Heart left ventricle (tissue), 16 donors: ENCODE measurements at regions of chr14 and their contacts with region 1.

Region 1: GRCh38 chr14:24978862-24979724 is 70.9 kb downstream of the STXBP6 start:
- DNase-seq: no peak
- ATAC-seq: no peak
- H3K4me3 ChIP-seq: no peak overlapping the region
- H3K27ac ChIP-seq: no peak overlapping the region
- H3K4me1 ChIP-seq: peaks cover 0 to 39% (median 8%) of the 10 kb centered on the region in 12 donors
- H3K27me3 ChIP-seq: no peaks in the 10 kb centered on the region
- CTCF ChIP-seq: no peak
- POLR2A ChIP-seq: no peak

Region 2: DNA sequence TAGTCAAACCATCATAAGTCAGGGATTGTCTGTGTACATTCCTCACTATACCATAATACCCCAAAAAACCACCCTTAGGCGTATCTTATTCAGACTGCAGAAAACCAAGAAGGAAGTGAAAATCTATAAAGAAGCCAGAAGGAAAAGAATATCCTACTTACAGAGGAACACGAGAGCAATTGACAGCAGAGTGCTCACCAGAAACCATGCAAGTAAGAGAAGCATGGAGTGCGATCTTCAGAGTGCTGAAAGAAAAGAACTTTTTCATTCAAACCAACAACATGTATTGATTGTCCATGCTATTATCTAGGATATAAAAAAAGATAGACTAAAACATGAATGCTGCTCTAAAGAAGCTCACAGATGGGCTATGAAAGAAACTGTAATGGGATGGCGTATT is 20.1 kb after region 1 on chr14:
- intact Hi-C with region 1: loop called in 1 of 10 experiments (anchors 2 kb)
- DNase-seq: no peak
- ATAC-seq: no peak
- H3K4me3 ChIP-seq: no peak overlapping the region
- H3K27ac ChIP-seq: no peak overlapping the region
- H3K4me1 ChIP-seq: peaks cover 3 to 42% (median 25%) of the 10 kb centered on the region in 12 donors
- H3K27me3 ChIP-seq: no peaks in the 10 kb centered on the region
- CTCF ChIP-seq: no peak
- POLR2A ChIP-seq: no peak